SK-N-SH (cell line): ENCODE measurements at regions of chr13 and their contacts with region 1.

Region 1: DNA sequence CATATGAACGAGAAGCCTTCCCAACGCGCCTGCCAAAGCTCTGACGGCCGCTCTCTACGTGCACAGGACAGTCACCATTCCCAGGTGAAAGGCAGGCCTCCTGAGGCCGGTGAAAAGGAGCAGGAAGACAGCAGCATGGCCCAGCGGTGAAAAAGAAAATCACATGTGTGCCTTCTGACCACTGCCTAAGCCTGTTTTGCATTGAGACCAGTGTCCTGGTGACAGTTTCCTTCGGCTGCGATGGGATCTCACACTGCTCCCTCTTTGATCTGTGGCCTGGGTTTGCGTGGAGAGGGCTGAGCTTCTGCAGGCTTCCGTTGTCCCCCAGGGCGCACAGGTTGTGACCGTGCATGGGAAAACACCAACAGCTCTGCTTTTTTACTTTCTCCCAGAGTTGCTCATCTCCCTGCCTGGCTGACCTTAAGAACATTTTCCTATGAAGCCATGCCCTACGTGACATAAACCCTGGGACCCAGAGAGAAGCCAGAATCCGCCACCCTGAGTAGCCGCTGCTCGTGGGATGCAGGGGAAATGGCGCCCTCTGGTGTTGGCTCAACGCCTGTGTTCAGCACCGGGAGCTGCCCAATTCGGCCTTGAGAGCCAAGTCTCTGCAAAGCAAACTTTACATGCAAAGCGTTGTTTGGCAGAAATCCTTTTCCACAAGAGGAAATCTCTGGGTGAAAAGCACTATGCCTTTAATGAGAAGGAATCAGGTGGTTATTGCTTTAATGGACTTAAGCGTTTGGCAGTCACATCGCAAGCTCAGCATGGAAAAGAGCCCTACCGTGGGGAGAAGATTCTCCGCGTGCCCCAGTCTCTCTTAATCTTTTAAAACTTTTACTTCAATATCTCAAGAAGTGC is 112.2 kb upstream of the GPR12 start:
- DNase-seq: peak; percentile 74
- H3K4me3 ChIP-seq: peak overlapping the region in 1 of 2 experiments; percentile 46; a peak in 2 of 4 replicates
- H3K27ac ChIP-seq: peak overlapping the region in 1 of 2 experiments; percentile 16; a peak in 1 of 4 replicates
- H3K4me1 ChIP-seq: peaks cover 0 to 7% of the 10 kb centered on the region in 2 experiments; a peak in 1 of 4 replicates
- H3K27me3 ChIP-seq: no peaks in the 10 kb centered on the region
- CTCF ChIP-seq: peak; percentile 73
- EP300 ChIP-seq: no peak
- RAD21 ChIP-seq: peak; percentile 84

Region 2: GRCh38 chr13:26538363-26539317 is 334.1 kb before region 1 on chr13:
- CTCF ChIA-PET with region 1: no interaction called
- POLR2A ChIA-PET with region 1: no interaction called
- DNase-seq: no peak
- H3K4me3 ChIP-seq: no peak overlapping the region
- H3K27ac ChIP-seq: no peak overlapping the region
- H3K4me1 ChIP-seq: peaks cover 0 to 9% of the 10 kb centered on the region in 2 experiments; a peak in 1 of 4 replicates
- H3K27me3 ChIP-seq: peaks cover 1% of the 10 kb centered on the region; the same call in 1 of the 2 replicates
- CTCF ChIP-seq: no peak
- EP300 ChIP-seq: no peak
- RAD21 ChIP-seq: no peak

Region 3: GRCh38 chr13:26698392-26699196 is 174.2 kb before region 1 on chr13:
- CTCF ChIA-PET with region 1: interaction called, 170 read pairs
- POLR2A ChIA-PET with region 1: no interaction called
- DNase-seq: peak; percentile 87
- H3K4me3 ChIP-seq: peak overlapping the region in 1 of 2 experiments; percentile 15; a peak in 2 of 4 replicates
- H3K27ac ChIP-seq: no peak overlapping the region
- H3K4me1 ChIP-seq: peaks cover 0 to 4% of the 10 kb centered on the region in 2 experiments; a peak in 1 of 4 replicates
- H3K27me3 ChIP-seq: no peaks in the 10 kb centered on the region
- CTCF ChIP-seq: peak; percentile 96
- EP300 ChIP-seq: no peak
- RAD21 ChIP-seq: peak; percentile 100

Region 4: DNA sequence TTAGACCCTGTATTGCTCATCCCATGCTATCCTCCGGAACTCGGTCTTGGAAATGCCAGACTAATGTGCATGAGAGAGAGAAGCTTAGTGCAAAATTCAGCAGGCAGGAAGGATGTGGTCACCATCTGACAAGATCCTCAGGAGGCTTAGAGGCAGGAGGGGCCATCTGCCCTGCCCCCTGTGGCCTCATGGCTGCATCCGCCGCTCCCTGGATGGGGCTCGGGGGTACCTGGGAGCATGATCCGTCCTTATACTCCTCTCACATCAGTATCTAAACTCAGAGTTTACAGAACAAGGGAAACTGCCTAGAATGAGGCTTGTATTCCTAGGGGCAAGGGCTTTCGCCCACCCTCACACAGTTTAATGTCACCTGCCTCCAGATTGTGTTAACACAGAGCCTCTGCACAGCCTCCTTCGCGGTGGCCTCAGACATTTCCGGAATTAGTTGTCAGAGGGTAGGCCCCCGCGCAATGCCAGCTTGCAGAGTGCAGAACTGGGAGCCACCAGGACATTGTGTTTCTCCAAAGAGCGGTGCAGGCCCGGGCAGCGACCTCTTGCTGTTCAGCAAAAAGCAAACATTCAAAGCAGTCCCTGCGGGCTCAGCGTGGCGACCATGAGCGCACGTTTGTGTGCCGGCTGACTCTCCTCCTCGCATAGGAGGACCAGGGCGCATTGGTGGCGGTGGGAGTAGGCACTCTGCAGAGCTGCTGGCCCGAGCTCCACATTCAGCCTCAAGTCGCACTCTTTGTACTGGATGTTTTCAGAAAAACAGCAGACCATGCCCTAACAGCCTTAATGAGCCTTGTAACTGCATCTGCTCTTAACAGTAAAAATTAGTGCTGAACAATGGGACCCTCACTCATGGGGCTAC is 151.3 kb before region 1 on chr13:
- CTCF ChIA-PET with region 1: interaction called, 32 read pairs
- POLR2A ChIA-PET with region 1: no interaction called
- DNase-seq: no peak
- H3K4me3 ChIP-seq: no peak overlapping the region
- H3K27ac ChIP-seq: no peak overlapping the region
- H3K4me1 ChIP-seq: no peaks in the 10 kb centered on the region; a peak in 1 of 4 replicates
- H3K27me3 ChIP-seq: no peaks in the 10 kb centered on the region; the same call in 1 of the 2 replicates
- CTCF ChIP-seq: no peak
- EP300 ChIP-seq: no peak
- RAD21 ChIP-seq: no peak

Region 5: GRCh38 chr13:26811581-26811980 is 61.2 kb before region 1 on chr13:
- CTCF ChIA-PET with region 1: interaction called, 19 read pairs
- POLR2A ChIA-PET with region 1: no interaction called
- DNase-seq: no peak
- H3K4me3 ChIP-seq: no peak overlapping the region
- H3K27ac ChIP-seq: no peak overlapping the region
- H3K4me1 ChIP-seq: no peaks in the 10 kb centered on the region
- H3K27me3 ChIP-seq: no peaks in the 10 kb centered on the region; the same call in 1 of the 2 replicates
- CTCF ChIP-seq: no peak
- EP300 ChIP-seq: no peak
- RAD21 ChIP-seq: no peak

Region 6: DNA sequence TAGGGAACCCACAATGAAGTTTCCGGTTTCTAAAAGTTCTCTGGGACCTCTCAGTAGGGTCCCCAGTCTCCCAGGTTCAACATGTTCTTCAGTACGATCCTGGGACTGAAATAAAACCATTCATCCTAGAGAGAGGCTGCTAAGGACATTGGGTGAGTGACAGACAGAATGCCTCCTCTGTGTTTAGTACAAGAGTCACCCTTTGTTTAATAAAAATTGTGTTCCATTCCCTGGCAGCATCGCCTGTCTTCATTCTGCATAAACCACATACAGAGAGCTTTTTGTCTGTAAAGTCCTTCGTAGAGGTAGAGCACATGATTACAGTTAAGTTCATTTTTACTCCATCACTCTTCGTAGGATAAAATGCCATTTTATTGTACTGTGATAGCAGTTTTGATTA is 16.8 kb before region 1 on chr13:
- CTCF ChIA-PET with region 1: interaction called, 50 read pairs
- POLR2A ChIA-PET with region 1: no interaction called
- DNase-seq: no peak
- H3K4me3 ChIP-seq: no peak overlapping the region
- H3K27ac ChIP-seq: no peak overlapping the region
- H3K4me1 ChIP-seq: peaks cover 0 to 21% of the 10 kb centered on the region in 2 experiments; a peak in 2 of 4 replicates
- H3K27me3 ChIP-seq: no peaks in the 10 kb centered on the region
- CTCF ChIP-seq: no peak
- EP300 ChIP-seq: no peak
- RAD21 ChIP-seq: no peak

Region 7: GRCh38 chr13:26897706-26898550 is 25.2 kb after region 1 on chr13:
- CTCF ChIA-PET with region 1: interaction called, 18 read pairs
- POLR2A ChIA-PET with region 1: no interaction called
- DNase-seq: no peak
- H3K4me3 ChIP-seq: no peak overlapping the region
- H3K27ac ChIP-seq: no peak overlapping the region
- H3K4me1 ChIP-seq: peaks cover 0 to 27% of the 10 kb centered on the region in 2 experiments; a peak in 1 of 4 replicates
- H3K27me3 ChIP-seq: no peaks in the 10 kb centered on the region
- CTCF ChIP-seq: no peak
- EP300 ChIP-seq: no peak
- RAD21 ChIP-seq: no peak